Activated CD8-positive, alpha-beta T cell treated with anti-CD3 and anti-CD28 coated beads, Interleukin-2, amount 10 ng/mL, durations not matched to agents 7 days and 5 days (primary cell): ENCODE measurements at regions of chr18 and their contacts with region 1.

Region 1: GRCh38 chr18:13813271-13813849 is 10.6 kb upstream of the MC5R start:
- DNase-seq: peak; percentile 66
- ATAC-seq: peak; percentile 79
- H3K4me3 Mint-ChIP-seq: no peak overlapping the region
- H3K27ac Mint-ChIP-seq: no peak overlapping the region
- H3K4me1 Mint-ChIP-seq: no peaks in the 10 kb centered on the region
- H3K27me3 Mint-ChIP-seq: peaks cover 15% of the 10 kb centered on the region

Region 2: DNA sequence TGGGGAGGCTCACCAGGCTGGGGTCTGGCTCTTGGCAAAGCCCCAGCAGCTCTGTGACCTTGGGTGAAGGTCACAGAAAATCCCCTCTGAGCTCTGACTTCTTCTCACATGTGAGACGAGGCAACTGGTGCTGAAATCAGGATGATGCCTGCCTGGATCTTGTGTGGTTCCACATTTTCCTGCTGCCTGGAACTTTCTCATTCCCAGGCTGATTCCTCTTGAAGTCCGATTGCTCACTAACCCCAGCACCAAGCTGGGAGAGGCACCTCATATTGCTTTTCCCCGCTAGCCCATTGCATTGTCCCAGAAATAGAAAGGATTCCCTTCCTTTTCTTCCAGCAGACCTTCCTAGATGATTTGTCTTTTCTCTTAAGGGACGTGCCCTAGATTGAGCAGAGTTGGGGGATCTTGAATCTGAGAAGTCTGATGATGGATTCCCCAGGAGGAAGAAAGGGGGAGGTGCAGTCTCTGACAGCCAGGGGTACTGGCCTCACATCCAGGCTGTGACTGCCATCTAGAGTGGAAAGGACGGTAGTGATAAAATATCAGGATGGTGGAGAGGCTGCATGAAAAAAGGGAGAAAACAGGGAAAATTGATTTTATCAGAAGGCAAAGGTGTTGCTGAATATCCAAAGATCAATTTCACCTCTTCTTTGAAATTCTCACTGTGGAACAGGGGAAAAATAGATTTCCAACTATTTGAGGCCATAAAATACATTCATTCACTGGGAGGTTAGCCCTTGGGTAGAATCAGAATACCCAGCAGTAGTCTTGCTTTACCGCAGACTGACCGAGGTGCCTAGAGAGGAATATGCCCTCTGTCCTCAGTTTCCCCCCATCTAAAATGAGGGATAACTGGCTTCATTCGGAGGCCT is 183.3 kb before region 1 on chr18:
- CTCF ChIA-PET with region 1: no interaction called
- POLR2A ChIA-PET with region 1: no interaction called
- DNase-seq: peak; percentile 76
- ATAC-seq: peak; percentile 81
- H3K4me3 Mint-ChIP-seq: no peak overlapping the region
- H3K27ac Mint-ChIP-seq: peak overlapping the region; percentile 58
- H3K4me1 Mint-ChIP-seq: peaks cover 45% of the 10 kb centered on the region
- H3K27me3 Mint-ChIP-seq: no peaks in the 10 kb centered on the region

Region 3: DNA sequence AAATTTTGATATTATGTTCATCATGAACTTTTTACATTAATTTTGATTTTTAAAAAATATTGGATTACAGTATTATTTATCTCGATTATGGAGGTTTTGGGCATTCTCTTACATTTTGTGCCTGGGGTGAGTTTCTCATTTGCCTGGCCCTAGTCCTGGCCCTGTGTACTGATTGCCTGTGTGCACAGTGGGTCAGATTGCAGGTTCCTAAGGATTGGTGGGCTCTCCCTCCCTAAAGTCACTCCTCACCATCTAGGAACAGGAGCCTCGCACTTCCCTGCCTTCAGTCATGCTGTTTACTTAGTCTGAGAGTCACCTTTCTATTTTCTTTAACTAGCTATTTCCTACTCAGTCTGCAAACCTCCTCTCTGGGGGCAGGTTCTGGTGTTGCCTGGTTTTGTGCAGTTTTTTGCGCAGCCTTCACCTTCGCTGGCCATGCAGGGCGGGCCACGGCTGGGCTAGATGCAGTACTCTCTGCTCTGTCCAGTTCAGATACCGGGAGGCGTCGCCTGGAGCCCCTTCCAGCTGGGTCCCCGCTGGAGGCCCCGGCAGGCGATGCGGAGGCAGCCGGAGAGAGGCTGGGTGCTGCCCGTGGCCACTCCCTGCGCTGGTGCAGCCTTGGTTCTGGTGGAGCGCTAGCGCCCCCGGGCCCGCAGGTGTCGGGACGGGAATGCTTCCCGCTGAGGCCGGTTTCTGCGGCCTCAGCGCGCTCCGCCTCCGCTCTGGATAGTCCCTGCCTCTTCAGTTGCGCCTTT is 12.7 kb before region 1 on chr18:
- CTCF ChIA-PET with region 1: interaction called, 36 read pairs
- POLR2A ChIA-PET with region 1: no interaction called
- DNase-seq: peak; percentile 63
- ATAC-seq: peak; percentile 97
- H3K4me3 Mint-ChIP-seq: peak overlapping the region; percentile 25
- H3K27ac Mint-ChIP-seq: no peak overlapping the region
- H3K4me1 Mint-ChIP-seq: peaks cover 7% of the 10 kb centered on the region
- H3K27me3 Mint-ChIP-seq: peaks cover 45% of the 10 kb centered on the region

Region 4: GRCh38 chr18:13823707-13824395 is 10.5 kb after region 1 on chr18 and contains the start of gene MC5R:
- CTCF ChIA-PET with region 1: interaction called, 24 read pairs
- POLR2A ChIA-PET with region 1: no interaction called
- DNase-seq: peak; percentile 74
- ATAC-seq: peak; percentile 99
- H3K4me3 Mint-ChIP-seq: peak within 1 kb of the TSS; percentile 40
- H3K27ac Mint-ChIP-seq: no peak within 1 kb of the TSS
- H3K4me1 Mint-ChIP-seq: peaks cover 9% of the 10 kb centered on the region
- H3K27me3 Mint-ChIP-seq: peaks cover 12% of the 10 kb centered on the region
- total RNA-seq, gene MC5R: not detected

Region 5: DNA sequence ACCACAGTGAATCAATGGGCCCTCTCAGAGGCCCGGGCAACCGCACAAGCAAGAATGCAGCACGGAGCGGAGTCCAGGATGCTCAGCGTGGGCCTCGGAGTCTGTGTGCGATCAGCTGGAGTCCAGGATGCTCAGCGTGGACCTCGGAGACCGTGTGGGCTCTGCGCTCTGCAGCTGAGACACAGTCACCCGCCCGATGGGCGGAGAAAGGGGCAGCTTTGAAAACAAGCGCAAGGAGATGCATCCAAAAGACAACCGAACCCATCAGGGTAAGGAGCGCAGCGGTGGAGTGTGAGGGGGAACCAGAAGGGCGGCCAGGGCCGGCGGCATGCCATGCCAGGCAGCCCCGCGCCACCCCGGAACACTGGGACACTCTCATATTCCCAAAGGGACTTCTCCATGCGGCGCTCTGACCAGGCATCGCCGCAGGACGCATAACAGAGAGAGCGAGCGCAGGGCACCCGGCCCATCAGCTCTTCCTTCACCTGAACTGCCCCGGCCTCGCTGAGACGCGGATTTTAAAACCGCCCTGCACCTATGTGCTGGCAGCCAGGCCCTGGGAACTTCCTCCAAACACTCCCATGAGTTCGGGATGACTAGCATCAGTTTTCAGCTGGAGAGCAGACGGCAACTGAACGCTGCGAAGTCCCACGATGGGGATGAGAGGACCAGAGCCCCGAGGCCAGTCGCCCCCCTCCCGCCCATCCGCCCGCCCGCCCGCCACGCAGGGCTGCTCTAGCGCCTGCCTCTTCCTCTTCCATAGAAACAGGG is 55.3 kb after region 1 on chr18:
- CTCF ChIA-PET with region 1: no interaction called
- POLR2A ChIA-PET with region 1: no interaction called
- DNase-seq: no peak
- ATAC-seq: no peak
- H3K4me3 Mint-ChIP-seq: no peak overlapping the region
- H3K27ac Mint-ChIP-seq: no peak overlapping the region
- H3K4me1 Mint-ChIP-seq: no peaks in the 10 kb centered on the region
- H3K27me3 Mint-ChIP-seq: peaks cover 35% of the 10 kb centered on the region

Region 6: GRCh38 chr18:14086458-14087231 is 273.3 kb after region 1 on chr18:
- CTCF ChIA-PET with region 1: interaction called, 28 read pairs
- POLR2A ChIA-PET with region 1: no interaction called
- DNase-seq: no peak
- ATAC-seq: peak; percentile 42
- H3K4me3 Mint-ChIP-seq: no peak overlapping the region
- H3K27ac Mint-ChIP-seq: no peak overlapping the region
- H3K4me1 Mint-ChIP-seq: no peaks in the 10 kb centered on the region
- H3K27me3 Mint-ChIP-seq: no peaks in the 10 kb centered on the region